Activated T-helper 1 cell treated with anti-CD3 and anti-CD28 coated beads, Interleukin-12 subunit alpha, Interleukin-12 subunit beta, Interleukin-2, Interleukin-4 antibody, amounts not matched to agents 30 ng/mL and 10 ng/mL and 1 ng/mL, durations not matched to agents 14 hours and 24 hours and 36 hours (primary cell): ENCODE measurements at regions of chr15 and their contacts with region 1.

Region 1: GRCh38 chr15:39125904-39126303 is 455.0 kb upstream of the THBS1 start:
- DNase-seq: peak; percentile 15
- H3K4me3 Mint-ChIP-seq: no peak overlapping the region
- H3K27ac Mint-ChIP-seq: no peak overlapping the region
- H3K4me1 Mint-ChIP-seq: peaks cover 19% of the 10 kb centered on the region
- H3K27me3 Mint-ChIP-seq: peaks cover 7% of the 10 kb centered on the region

Region 2: DNA sequence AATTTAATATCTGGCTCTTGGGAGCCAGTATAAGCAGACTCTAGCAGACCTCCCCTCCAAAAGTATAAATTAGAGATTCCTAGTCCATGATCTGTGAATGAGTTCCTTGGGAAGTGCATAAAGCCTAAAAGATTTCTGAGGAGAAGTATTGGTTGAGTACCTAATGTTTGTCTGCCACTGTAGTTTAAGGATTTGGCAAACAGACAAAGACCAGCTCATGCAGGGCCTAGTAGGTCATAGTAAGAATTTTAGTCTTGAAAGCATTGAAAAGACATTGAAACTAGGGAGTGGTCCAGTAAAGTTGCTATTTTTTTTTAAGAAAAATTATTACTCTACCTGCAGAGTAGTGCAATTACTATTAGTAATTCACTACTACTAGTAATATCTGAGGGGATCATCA is 805.7 kb before region 1 on chr15:
- intact Hi-C with region 1: no loop called
- DNase-seq: no peak
- H3K4me3 Mint-ChIP-seq: no peak overlapping the region
- H3K27ac Mint-ChIP-seq: no peak overlapping the region
- H3K4me1 Mint-ChIP-seq: no peaks in the 10 kb centered on the region
- H3K27me3 Mint-ChIP-seq: peaks cover 2% of the 10 kb centered on the region

Region 3: GRCh38 chr15:38683382-38684242 is 442.3 kb before region 1 on chr15:
- intact Hi-C with region 1: no loop called
- DNase-seq: peak; percentile 57
- H3K4me3 Mint-ChIP-seq: peak overlapping the region; percentile 65
- H3K27ac Mint-ChIP-seq: peak overlapping the region; percentile 95
- H3K4me1 Mint-ChIP-seq: peaks cover 80% of the 10 kb centered on the region
- H3K27me3 Mint-ChIP-seq: no peaks in the 10 kb centered on the region

Region 4: GRCh38 chr15:38828031-38828532 is 297.8 kb before region 1 on chr15:
- intact Hi-C with region 1: no loop called
- DNase-seq: no peak
- H3K4me3 Mint-ChIP-seq: no peak overlapping the region
- H3K27ac Mint-ChIP-seq: no peak overlapping the region
- H3K4me1 Mint-ChIP-seq: no peaks in the 10 kb centered on the region
- H3K27me3 Mint-ChIP-seq: peaks cover 5% of the 10 kb centered on the region

Region 5: DNA sequence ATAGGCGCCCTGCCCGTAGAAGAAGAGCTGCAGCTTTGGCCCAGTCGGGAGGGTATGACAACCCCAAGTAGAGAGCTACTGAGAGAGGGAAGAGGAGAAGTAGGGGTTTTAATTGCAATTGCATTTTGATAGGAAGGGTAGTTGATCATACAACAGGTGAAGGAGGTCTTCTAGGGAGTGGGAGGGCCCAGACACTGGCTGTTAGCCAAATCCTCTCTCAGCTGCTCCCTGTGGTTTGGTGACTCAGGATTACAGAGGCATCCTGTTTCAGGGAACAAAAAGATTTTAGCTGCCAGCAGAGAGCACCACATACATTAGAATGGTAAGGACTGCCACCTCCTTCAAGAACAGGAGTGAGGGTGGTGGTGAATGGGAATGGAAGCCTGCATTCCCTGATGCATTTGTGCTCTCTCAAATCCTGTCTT is 46.1 kb after region 1 on chr15:
- intact Hi-C with region 1: loop called (anchors 5 kb)
- DNase-seq: no peak
- H3K4me3 Mint-ChIP-seq: no peak overlapping the region
- H3K27ac Mint-ChIP-seq: no peak overlapping the region
- H3K4me1 Mint-ChIP-seq: no peaks in the 10 kb centered on the region
- H3K27me3 Mint-ChIP-seq: peaks cover 14% of the 10 kb centered on the region

Region 6: DNA sequence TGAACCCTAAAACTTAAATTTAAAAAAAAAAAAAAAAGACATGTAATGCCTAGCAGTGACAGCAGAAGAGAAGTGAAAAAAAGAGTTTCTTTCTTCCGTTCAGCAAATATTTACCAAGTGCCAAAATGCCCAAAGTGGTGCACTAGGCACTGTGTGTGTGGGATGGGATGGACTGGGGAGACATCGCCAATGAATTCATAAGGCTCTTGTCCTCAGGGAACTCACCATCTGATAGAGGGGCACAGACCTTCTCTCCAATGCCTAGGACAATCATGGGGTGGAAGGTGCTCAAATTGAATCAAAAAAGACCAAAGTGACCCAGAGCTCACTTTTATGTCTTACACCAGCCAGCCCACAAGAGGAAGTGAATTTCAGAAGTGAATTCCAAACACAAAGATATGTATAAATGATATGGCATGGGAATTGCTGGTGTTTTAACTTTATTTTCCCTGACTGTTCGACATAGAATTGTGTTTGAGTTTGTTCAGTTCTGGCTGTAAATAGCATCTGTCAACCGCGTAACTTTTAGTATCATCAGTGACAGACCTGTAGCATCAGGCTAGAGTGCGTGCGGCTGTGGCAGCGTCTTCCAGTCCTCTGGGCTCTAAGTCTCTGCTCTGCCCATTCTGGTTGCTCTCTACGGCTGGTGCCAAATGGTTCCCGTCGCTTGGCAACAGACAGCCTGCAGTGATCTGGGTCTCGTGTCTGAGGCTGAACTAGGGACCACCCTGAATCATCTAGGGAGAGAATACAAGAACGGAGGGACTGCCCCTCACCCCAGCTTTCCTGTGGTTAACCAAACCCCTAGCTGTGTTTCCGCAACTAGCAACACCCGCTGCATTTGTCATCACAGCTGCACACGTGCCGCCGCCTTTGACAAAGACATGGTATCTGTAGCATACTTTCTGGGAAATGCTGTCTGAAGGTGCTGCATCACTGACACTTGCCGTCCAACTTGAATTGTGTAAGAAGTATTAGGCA is 300.9 kb after region 1 on chr15:
- intact Hi-C with region 1: loop called (anchors 5 kb)
- DNase-seq: peak; percentile 63
- H3K4me3 Mint-ChIP-seq: peak overlapping the region; percentile 19
- H3K27ac Mint-ChIP-seq: peak overlapping the region; percentile 55
- H3K4me1 Mint-ChIP-seq: peaks cover 19% of the 10 kb centered on the region
- H3K27me3 Mint-ChIP-seq: peaks cover 24% of the 10 kb centered on the region